ENCODE measurements at regions of chr5 and their contacts with region 1.

Region 1: DNA sequence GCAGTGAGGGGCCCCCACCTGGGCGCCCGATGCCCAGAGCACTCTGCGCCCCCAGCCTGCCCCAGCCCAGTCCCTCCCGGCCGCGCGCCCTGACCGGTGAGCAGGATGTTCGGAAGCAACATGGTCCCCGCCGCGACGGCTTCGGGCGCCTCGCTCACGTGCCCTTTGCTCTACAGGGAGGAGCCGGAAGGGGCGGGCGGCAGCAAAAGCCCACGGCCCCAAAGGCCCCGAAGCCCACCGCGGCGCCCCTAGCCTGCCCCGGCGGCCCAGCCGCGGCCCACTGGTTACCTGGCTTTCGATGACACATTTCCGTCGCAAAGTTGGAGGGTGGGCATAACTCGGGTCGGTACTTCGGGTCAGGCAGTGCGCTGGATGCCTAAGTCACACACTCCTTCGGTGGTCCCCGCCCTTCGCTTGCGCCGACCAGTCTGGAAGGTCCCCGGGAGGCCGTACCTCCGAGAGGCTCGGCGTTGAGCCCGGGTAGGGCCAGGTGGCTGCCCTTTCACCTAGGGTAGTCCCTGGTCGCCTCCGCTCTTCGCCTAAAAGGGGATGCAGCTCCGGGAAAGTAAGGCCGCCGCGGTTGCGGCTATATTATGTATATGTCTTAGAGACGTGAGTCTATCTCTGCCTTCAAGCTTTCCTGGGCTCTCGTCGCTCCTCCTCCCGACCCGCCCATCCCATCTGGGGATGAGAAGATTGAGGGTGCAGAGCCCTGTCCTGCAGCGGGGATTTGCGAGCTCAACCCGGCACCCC is at the starts of genes AK6, RAD17 and TAF9:
- DNase-seq: peak; percentile 95 to 98
- ATAC-seq: peak; percentile 99
- H3K4me3 ChIP-seq: peak within 1 kb of the TSS; percentile 75 to 82
- H3K27ac ChIP-seq: peak within 1 kb of the TSS; percentile 41 to 49
- H3K4me1 ChIP-seq: peaks cover 0 to 6% of the 10 kb centered on the region in 2 donors
- H3K27me3 ChIP-seq: no peaks in the 10 kb centered on the region
- total RNA-seq, gene AK6: 28.0 to 30.4 TPM
- total RNA-seq, gene RAD17: 16.7 to 18.0 TPM
- total RNA-seq, gene TAF9: 28.6 to 33.6 TPM

Region 2: GRCh38 chr5:68898951-68899471 is 470.5 kb before region 1 on chr5:
- intact Hi-C with region 1: no loop called
- DNase-seq: no peak
- ATAC-seq: no peak
- H3K4me3 ChIP-seq: no peak overlapping the region
- H3K27ac ChIP-seq: no peak overlapping the region
- H3K4me1 ChIP-seq: no peaks in the 10 kb centered on the region
- H3K27me3 ChIP-seq: no peaks in the 10 kb centered on the region

Region 3: DNA sequence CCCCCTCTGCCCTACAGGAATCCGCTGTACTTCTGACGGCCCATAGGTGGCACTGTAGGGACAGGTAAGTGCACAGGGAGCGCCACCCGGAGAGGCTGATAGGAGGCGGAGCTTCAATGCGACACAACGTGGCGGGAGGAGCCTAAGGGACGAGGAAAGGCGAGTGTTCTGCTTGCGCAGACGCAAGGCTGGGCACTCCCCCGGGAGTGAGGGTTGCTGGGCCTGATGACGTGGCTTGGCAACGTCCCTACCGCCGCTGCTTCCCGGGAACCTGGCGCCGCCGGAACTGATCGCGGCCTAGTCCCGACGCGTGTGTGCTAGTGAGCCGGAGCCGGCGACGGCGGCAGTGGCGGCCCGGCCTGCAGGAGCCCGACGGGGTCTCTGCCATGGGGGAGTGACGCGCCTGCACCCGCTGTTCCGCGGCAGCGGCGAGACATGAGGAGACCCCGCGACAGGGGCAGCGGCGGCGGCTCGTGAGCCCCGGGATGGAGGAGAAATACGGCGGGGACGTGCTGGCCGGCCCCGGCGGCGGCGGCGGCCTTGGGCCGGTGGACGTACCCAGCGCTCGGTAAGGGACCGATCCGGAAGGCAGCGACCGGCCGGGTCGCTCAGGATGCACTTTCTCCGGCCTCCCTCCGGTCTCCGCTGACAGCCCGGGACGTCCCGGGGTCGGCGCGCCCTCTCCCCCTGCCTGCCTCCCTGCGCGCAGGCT is 275.6 kb before region 1 on chr5 and contains the start of gene SLC30A5:
- intact Hi-C with region 1: loop called (anchors 2 to 10 kb)
- DNase-seq: peak; percentile 99 to 100
- ATAC-seq: peak; percentile 100
- H3K4me3 ChIP-seq: peak within 1 kb of the TSS; percentile 81 to 97
- H3K27ac ChIP-seq: peak within 1 kb of the TSS; percentile 84 to 91
- H3K4me1 ChIP-seq: no peaks in the 10 kb centered on the region
- H3K27me3 ChIP-seq: no peaks in the 10 kb centered on the region
- total RNA-seq, gene SLC30A5: 42.8 to 43.9 TPM

Region 4: DNA sequence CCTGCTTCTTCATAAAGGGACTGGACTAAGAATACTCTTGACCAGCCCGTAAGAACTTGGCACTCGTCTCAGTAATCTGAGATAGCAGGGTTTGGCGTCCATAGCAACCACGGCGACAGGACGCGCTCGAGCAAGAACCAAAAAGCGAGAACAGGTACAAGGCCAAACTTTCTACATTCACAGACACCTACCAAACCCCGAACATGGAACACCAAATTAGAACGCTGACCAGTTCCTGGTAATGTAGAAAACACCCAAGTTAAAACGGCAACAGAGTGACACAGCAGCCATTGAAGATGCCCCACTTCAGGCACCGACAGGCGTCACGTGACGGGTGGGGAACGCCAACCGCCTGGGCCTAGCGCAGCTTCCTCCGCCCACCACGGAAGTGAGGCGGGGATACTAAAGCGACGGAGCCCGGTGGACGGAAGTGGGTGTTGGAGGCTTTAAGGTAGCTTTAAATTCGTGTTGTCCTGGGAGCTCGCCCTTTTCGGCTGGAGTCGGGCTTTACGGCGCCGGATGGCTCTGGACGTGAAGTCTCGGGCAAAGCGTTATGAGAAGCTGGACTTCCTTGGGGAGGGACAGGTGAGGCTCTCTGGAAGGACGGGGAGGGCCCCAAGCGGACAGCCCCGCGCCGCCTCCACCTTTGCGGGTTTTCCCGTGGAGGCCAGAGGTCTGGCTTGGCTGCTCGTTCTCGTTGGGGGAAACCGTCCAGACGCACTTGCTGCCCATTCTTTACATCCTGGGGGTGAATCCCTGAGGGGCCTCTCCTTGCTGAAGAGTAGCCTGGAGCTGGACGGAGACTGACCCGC is 134.9 kb before region 1 on chr5 and contains the start of gene CDK7:
- intact Hi-C with region 1: loop called in 1 of 2 experiments (anchors 5 kb)
- DNase-seq: peak; percentile 97 to 98
- ATAC-seq: peak; percentile 99
- H3K4me3 ChIP-seq: peak within 1 kb of the TSS; percentile 65 to 93
- H3K27ac ChIP-seq: peak within 1 kb of the TSS in 1 of 2 donors; percentile 25
- H3K4me1 ChIP-seq: peaks cover 0 to 5% of the 10 kb centered on the region in 2 donors
- H3K27me3 ChIP-seq: no peaks in the 10 kb centered on the region
- total RNA-seq, gene CDK7: 22.0 to 22.7 TPM